ENCODE measurements at regions of chr7 and their contacts with region 1.

Region 1: DNA sequence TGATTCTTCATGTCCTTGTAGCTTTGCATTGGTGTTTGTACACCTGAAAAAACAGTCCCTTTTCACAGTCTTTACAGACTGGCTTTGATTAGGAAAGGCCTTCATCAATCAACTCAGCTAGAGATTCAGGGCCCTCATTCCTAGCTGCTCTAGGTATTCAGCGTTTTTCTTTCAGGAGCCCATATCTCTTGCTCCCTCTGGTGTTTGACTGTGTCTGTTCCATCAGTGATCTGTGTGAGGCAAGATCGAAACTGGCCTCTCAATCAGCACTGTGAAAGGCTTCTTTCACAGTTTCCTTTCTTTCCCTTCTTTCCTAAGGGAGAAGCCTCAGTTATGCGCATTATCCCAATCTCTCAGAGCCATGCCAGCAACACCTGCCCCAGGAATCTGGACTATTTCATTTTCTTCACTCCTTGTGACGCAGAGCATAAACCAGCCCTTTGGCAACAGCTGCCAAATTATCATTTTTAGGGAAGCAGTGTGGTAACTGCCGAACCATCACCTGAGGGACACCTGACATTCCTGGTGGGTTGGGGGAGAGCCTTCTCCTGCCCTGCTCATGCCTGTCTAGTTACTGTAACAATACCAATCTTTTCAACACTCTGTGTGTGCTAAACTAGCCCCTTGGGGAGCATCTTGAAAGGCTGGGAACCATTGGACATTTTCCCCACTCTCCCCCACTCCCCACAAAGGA is 75.7 kb upstream of the CCDC71L start:
- DNase-seq: peak; percentile 80
- H3K4me3 ChIP-seq: peak overlapping the region; percentile 7 to 34 (median 22)
- H3K27ac ChIP-seq: peak overlapping the region; percentile 77
- H3K4me1 ChIP-seq: peaks cover 17% of the 10 kb centered on the region
- H3K27me3 ChIP-seq: no peaks in the 10 kb centered on the region
- CTCF ChIP-seq: peak; percentile 81 to 84

Region 2: GRCh38 chr7:106187613-106188350 is 548.9 kb before region 1 on chr7:
- CTCF ChIA-PET with region 1: no interaction called
- dilution Hi-C with region 1: no loop called
- in situ Hi-C with region 1: loop called in 1 of 2 experiments (anchors 10 kb)
- intact Hi-C with region 1: no loop called
- DNase-seq: peak; percentile 84
- H3K4me3 ChIP-seq: no peak overlapping the region
- H3K27ac ChIP-seq: no peak overlapping the region
- H3K4me1 ChIP-seq: peaks cover 8% of the 10 kb centered on the region
- H3K27me3 ChIP-seq: no peaks in the 10 kb centered on the region
- CTCF ChIP-seq: no peak

Region 3: DNA sequence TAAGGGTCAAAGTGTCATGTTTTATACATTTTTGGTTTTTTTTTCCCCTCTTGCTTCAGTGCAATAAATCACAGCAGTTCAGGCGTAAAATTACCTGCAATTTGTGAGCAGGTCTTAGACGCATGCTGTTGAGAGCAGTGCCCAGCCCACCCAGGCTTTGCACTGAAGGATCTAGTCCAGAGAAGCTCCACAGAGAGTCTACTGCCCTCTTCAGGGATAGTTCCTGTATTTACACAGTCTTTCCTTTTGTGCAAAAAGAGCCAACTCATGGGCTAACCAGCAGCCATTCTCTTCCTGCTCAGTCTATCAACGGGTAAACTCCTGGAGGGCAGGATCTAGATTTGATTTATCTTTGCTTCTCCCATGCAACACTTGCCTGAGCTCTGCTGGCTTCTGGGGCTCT is 369.6 kb before region 1 on chr7:
- CTCF ChIA-PET with region 1: no interaction called
- dilution Hi-C with region 1: no loop called
- in situ Hi-C with region 1: no loop called
- intact Hi-C with region 1: loop called (anchors 2 kb)
- DNase-seq: no peak
- H3K4me3 ChIP-seq: no peak overlapping the region
- H3K27ac ChIP-seq: no peak overlapping the region
- H3K4me1 ChIP-seq: peaks cover 3% of the 10 kb centered on the region
- H3K27me3 ChIP-seq: no peaks in the 10 kb centered on the region
- CTCF ChIP-seq: peak; percentile 17 to 51

Region 4: DNA sequence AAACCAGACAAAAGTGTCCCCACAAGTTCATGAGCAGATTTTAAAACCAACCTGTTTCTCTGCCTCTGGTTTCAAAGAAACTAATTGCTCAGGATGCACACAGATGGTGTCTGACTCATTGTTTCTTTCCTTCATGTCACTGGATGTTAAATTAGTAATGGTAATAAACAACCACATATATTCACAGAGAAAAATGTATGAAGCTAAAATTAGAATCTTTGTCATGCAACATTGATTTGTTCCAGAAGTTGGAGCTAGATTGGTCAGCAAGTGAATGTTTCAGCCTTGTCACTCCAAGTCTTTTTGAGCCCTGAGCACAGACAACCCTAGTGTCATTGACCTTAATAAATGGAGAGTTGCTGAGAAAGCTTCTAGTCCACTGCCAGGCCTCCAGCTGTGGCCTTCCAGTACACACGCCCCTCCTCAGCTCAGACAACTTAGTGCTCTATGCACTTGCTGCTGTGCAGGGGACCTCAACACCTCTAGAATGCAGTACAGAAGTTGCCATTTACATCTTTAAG is 251.6 kb before region 1 on chr7:
- CTCF ChIA-PET with region 1: interaction called, 3 read pairs
- dilution Hi-C with region 1: loop called (anchors 10 kb)
- in situ Hi-C with region 1: loop called in 1 of 2 experiments (anchors 10 kb)
- intact Hi-C with region 1: loop called (anchors 5 kb)
- DNase-seq: peak; percentile 91
- H3K4me3 ChIP-seq: no peak overlapping the region
- H3K27ac ChIP-seq: peak overlapping the region; percentile 87
- H3K4me1 ChIP-seq: peaks cover 40% of the 10 kb centered on the region
- H3K27me3 ChIP-seq: no peaks in the 10 kb centered on the region
- CTCF ChIP-seq: no peak

Region 5: DNA sequence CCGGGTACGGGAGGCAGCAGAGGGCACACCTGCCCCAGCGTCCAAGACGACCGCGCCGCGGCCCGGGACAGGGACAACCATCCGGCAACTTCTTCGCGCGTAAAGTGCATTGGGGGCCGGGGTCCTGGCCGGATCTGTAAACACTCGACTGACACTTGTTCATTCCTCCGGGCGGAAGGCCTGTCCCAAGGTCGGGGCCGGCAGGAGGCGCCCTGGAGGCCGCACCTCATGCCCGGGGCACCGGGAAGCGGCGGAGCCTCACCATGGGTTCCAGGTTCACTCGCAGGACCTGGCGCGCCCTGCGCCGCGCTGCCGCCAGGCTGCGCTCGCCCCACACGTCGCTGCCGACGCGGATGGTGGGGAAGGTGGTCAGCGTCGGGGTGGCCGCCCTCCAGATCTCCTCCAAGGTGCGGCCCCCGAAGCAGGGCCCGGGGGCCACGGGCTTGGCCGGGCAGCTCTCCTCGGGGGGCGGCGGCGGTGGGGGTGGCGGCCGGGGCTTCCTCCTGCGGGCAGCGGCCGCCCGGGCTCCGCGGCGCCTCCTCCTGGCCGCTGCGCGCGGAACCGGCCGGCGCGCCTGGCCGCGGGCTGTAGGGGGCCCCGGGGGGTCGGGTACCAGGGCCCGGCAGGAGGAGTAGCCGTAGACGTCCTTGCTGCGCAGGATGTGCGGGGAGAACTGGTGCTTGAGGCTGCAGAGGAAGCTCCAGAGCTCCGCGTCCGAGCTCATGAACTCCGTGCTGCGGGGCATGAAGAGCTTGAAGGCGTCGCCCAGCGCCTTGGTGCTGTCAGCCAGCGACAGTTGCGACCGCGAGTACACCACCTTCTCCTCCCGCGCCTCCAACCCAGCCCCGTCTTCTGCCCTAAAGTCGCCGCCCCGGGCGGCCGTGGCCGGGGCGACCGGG is 76.4 kb before region 1 on chr7:
- CTCF ChIA-PET with region 1: interaction called, 6 read pairs
- dilution Hi-C with region 1: loop called (anchors 5 kb)
- in situ Hi-C with region 1: loop called (anchors 5 kb)
- intact Hi-C with region 1: loop called (anchors 1 kb)
- DNase-seq: peak; percentile 74
- H3K4me3 ChIP-seq: peak overlapping the region; percentile 74 to 99 (median 90)
- H3K27ac ChIP-seq: peak overlapping the region; percentile 81
- H3K4me1 ChIP-seq: peaks cover 6% of the 10 kb centered on the region
- H3K27me3 ChIP-seq: no peaks in the 10 kb centered on the region
- CTCF ChIP-seq: peak; percentile 75 to 93

Region 6: GRCh38 chr7:106848851-106849442 is 112.3 kb after region 1 on chr7:
- CTCF ChIA-PET with region 1: no interaction called
- dilution Hi-C with region 1: no loop called
- in situ Hi-C with region 1: no loop called
- intact Hi-C with region 1: no loop called
- DNase-seq: peak; percentile 40
- H3K4me3 ChIP-seq: no peak overlapping the region
- H3K27ac ChIP-seq: no peak overlapping the region
- H3K4me1 ChIP-seq: peaks cover 3% of the 10 kb centered on the region
- H3K27me3 ChIP-seq: peaks cover 6% of the 10 kb centered on the region
- CTCF ChIP-seq: no peak